PC-9 (cell line): ENCODE measurements at regions of chr17 and their contacts with region 1.

Region 1: DNA sequence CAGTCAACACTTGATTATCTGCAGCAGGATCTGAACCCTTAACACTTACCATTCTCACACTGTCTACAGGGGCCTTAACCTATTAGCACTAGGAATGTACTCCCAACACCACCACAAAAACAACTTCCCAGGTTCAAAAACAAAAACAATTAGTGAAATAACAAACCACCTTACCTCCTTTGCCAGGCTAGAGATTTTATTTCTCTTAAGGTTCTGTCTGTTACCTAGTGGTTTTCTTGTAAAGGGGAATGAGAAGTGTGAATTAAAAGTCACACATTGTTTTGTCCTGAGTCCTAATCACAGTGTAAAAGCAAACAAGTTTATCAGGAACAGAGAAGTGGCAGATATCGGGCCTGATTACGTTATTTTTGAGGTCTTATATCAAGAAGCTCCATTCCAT is 9.7 kb downstream of the SMARCE1 start:
- DNase-seq: no peak
- H3K4me3 ChIP-seq: no peak overlapping the region
- H3K27ac ChIP-seq: no peak overlapping the region
- H3K4me1 ChIP-seq: no peaks in the 10 kb centered on the region
- H3K27me3 ChIP-seq: no peaks in the 10 kb centered on the region
- CTCF ChIP-seq: no peak

Region 2: DNA sequence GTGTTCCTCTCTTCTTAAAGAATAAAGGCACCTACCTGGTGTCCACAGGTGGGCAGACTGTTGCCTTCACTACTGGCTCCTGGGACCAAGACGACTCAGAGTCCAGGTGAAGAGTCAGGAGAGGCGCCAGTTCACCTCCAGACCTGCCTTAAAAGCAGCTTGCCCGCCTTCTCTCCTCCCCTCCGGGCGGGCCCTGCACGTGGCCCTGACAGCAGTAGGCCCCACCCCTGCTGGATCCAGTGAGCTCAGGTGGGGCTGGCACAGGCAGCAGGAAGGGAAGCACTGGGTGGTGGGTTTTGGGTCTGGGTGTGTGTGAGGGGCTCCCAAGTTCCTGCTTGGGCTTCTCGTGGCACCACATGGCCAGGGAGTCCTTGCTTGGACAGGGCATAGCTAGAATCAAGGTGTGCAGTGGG is 136.4 kb before region 1 on chr17 and contains the start of gene TNS4:
- CTCF ChIA-PET with region 1: no interaction called
- POLR2A ChIA-PET with region 1: no interaction called
- intact Hi-C with region 1: no loop called
- DNase-seq: peak; percentile 77 to 80
- H3K4me3 ChIP-seq: peak within 1 kb of the TSS; percentile 80
- H3K27ac ChIP-seq: no peak within 1 kb of the TSS
- H3K4me1 ChIP-seq: peaks cover 45% of the 10 kb centered on the region
- H3K27me3 ChIP-seq: no peaks in the 10 kb centered on the region
- CTCF ChIP-seq: no peak
- total RNA-seq, gene TNS4: 17.4 and 23.5 TPM in 2 replicates

Region 3: DNA sequence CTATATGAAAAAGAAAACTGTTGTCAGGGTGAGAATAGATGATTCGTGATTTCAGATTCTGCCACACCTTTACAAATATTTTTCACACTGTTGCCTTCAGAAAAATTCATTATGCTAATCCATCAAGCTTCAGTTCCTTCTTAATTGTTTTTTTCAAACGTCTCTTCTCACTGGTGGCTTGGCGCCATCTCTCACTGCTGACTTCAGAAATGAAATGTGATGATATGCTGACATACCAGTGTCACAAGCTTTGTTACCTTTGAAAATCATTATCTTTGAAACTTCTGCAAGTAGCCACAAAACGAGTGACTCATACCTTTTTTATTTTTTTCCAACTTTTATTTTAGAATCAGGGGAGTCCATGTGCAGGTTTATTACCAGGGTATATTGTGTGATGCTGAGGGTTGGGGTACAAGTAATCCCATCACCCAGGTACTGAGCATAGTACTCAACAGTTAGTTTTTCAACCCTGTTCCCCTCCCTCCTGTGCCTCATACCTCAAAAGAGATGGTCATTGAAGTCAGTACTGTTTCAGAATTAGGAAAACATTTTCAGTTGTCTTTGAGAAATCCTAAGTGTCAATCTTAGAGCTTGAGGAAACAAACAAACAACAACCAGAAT is 41.1 kb after region 1 on chr17:
- CTCF ChIA-PET with region 1: no interaction called
- POLR2A ChIA-PET with region 1: no interaction called
- intact Hi-C with region 1: no loop called
- DNase-seq: peak; percentile 30 to 69
- H3K4me3 ChIP-seq: no peak overlapping the region
- H3K27ac ChIP-seq: no peak overlapping the region
- H3K4me1 ChIP-seq: peaks cover 14% of the 10 kb centered on the region
- H3K27me3 ChIP-seq: no peaks in the 10 kb centered on the region
- CTCF ChIP-seq: no peak

Region 4: DNA sequence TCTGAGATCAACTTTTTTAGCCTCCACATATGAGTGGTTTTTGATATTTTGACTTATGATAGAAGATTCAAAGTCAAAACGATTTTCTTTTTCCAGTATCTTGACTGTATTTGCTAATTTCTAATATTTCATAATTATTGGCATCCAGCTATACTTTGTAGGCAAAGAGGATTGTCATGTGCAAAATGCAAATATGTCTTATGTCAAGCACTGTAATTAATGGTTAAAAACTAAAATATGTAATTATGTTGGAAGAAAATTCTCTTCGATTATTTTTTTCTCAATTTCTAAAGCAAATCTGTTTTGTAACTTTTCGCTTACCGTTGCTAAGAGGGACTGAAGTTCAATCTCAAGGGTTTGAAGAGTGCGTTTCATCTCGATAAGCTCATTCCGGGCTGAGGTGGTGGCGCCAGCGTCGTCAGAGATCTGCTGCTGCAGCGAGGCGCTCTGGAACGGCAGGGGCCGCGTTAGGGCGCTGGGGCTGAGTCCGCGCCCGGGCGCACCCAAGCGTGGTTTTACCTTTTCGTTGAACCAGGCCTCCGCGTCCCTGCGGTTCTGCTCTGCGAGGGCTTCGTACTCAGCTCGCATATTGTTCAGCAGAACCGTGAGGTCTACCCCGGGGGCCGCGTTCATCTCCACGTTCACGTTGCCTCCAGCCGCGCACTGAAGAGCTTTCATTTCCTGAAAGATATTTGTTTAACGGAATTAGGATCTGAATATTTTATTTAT is 141.4 kb after region 1 on chr17:
- CTCF ChIA-PET with region 1: no interaction called
- POLR2A ChIA-PET with region 1: no interaction called
- intact Hi-C with region 1: loop called (anchors 5 kb)
- DNase-seq: peak in 1 of 2 experiments; percentile 25
- H3K4me3 ChIP-seq: peak overlapping the region; percentile 41
- H3K27ac ChIP-seq: no peak overlapping the region
- H3K4me1 ChIP-seq: no peaks in the 10 kb centered on the region
- H3K27me3 ChIP-seq: no peaks in the 10 kb centered on the region
- CTCF ChIP-seq: no peak